Naive thymus-derived CD4-positive, alpha-beta T cell (primary cell): ENCODE measurements at regions of chr20 and their contacts with region 1.

Region 1: DNA sequence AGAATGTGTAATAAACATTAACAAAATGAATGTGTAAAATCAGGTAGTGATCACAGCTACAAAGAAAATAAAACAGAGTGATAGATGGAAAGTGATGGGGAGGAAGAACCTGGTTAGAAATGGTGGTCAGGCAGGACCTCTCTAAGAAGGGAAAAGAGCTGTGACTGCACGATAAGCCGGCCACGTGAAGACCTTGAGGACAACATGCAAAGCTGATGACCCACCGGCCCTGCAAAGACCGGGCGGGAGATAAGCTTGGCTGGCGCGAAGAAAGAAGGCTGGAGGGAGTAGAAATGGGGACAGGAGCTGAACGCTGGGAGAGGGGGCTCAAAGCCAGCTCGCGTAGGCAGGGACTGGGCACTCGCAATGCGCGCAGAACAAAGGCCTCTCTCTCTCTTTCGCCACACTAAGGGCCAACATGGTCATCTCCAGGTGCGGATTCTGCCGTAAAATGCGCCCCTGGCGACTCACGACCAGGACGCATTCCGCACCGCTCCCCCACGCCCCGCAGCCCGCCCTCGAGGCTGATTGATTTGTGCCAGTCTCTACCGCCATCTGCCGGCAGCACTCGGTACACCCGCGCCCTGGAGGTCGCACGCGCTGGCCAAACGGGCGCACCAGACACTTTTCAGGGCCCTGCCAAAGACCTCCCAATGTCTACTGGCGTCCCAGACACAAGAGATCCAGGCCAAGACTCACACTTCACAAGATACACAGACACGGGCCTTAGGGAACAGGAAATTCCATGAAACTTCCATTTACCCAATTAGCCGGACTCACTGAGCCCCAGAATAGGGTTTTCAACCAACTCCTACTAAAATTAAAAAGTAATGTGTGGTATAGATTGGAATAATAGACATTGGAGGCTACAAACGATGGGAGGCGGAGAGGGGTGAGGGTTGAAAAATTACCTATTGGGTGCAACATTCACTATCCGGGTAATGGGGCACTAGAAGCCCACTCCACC is 9.4 kb downstream of the DEFB132 start:
- DNase-seq: peak; percentile 74 to 91 (median 86)
- ATAC-seq: peak; percentile 99
- H3K4me3 ChIP-seq: peak overlapping the region; percentile 57
- H3K4me3 Mint-ChIP-seq: peak overlapping the region; percentile 82 to 94 (median 90)
- H3K27ac ChIP-seq: no peak overlapping the region
- H3K27ac Mint-ChIP-seq: peak overlapping the region in 5 of 9 donors; percentile 32 to 85 (median 60)
- H3K4me1 ChIP-seq: peaks cover 0 to 5% of the 10 kb centered on the region in 2 donors
- H3K4me1 Mint-ChIP-seq: peaks cover 5 to 11% (median 8%) of the 10 kb centered on the region in 7 donors
- H3K27me3 ChIP-seq: no peaks in the 10 kb centered on the region
- H3K27me3 Mint-ChIP-seq: peaks cover 0 to 9% (median 5%) of the 10 kb centered on the region in 5 donors

Region 2: GRCh38 chr20:208942-209566 is 57.8 kb before region 1 on chr20:
- CTCF ChIA-PET with region 1: interaction called, 16 read pairs
- POLR2A ChIA-PET with region 1: no interaction called
- intact Hi-C with region 1: loop called (anchors 1 kb)
- DNase-seq: peak in 7 of 9 donors; percentile 40 to 67 (median 55)
- ATAC-seq: peak; percentile 86
- H3K4me3 ChIP-seq: no peak overlapping the region
- H3K4me3 Mint-ChIP-seq: no peak overlapping the region
- H3K27ac ChIP-seq: no peak overlapping the region
- H3K27ac Mint-ChIP-seq: no peak overlapping the region
- H3K4me1 ChIP-seq: no peaks in the 10 kb centered on the region
- H3K4me1 Mint-ChIP-seq: no peaks in the 10 kb centered on the region
- H3K27me3 ChIP-seq: no peaks in the 10 kb centered on the region
- H3K27me3 Mint-ChIP-seq: peaks cover 0 to 28% (median 0%) of the 10 kb centered on the region in 5 donors

Region 3: GRCh38 chr20:252801-253200 is 14.1 kb before region 1 on chr20:
- CTCF ChIA-PET with region 1: interaction called, 10 read pairs
- POLR2A ChIA-PET with region 1: no interaction called
- intact Hi-C with region 1: no loop called
- DNase-seq: no peak
- ATAC-seq: no peak
- H3K4me3 ChIP-seq: no peak overlapping the region
- H3K4me3 Mint-ChIP-seq: no peak overlapping the region
- H3K27ac ChIP-seq: no peak overlapping the region
- H3K27ac Mint-ChIP-seq: peak overlapping the region in 2 of 9 donors; percentile 4 to 37
- H3K4me1 ChIP-seq: peaks cover 0 to 4% of the 10 kb centered on the region in 2 donors
- H3K4me1 Mint-ChIP-seq: peaks cover 0 to 21% (median 13%) of the 10 kb centered on the region in 7 donors
- H3K27me3 ChIP-seq: no peaks in the 10 kb centered on the region
- H3K27me3 Mint-ChIP-seq: peaks cover 0 to 5% (median 0%) of the 10 kb centered on the region in 5 donors

Region 4: DNA sequence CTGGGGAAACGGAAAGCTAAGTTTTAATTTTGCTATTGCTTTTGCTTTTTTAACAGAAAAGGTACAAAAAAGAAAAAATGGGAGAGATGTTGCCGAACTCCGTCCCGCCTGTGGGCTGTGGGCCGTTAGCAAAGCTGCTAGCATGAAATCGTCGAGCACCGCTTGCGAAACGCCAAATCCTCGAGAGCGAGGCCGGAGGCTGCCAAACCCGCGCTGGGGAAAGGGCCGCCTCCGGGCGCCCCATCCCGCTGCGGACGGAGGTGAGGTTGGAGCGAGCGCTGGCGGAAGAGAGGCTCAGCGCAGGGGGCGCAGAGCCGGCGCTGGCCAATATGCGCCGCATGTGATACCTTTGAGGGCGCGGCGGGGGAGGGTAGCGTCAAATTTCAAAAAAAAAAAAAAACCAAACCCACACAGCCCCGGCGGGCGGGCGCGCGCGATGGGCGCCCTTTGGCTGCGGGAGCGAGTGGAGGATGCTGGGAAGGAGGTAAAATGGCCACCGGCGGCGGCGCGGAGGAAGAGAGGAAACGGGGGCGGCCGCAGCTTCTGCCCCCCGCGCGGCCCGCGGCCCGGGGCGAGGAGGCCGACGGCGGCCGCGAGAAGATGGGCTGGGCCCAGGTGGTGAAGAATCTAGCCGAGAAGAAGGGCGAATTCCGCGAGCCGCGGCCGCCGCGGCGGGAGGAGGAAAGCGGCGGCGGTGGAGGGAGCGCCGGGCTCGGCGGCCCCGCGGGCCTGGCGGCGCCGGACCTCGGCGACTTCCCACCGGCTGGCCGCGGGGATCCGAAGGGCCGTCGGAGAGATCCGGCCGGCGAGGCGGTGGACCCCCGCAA is 30.4 kb after region 1 on chr20 and contains the start of gene ZCCHC3:
- CTCF ChIA-PET with region 1: no interaction called
- POLR2A ChIA-PET with region 1: interaction called, 5 read pairs
- intact Hi-C with region 1: loop called in 1 of 2 experiments (anchors 1 kb)
- DNase-seq: peak; percentile 72 to 89 (median 84)
- ATAC-seq: peak; percentile 94
- H3K4me3 ChIP-seq: peak within 1 kb of the TSS; percentile 96
- H3K4me3 Mint-ChIP-seq: peak within 1 kb of the TSS; percentile 92 to 100 (median 98)
- H3K27ac ChIP-seq: peak within 1 kb of the TSS; percentile 91
- H3K27ac Mint-ChIP-seq: peak within 1 kb of the TSS; percentile 94 to 100 (median 97)
- H3K4me1 ChIP-seq: peaks cover 14 to 21% of the 10 kb centered on the region in 2 donors
- H3K4me1 Mint-ChIP-seq: peaks cover 33 to 51% (median 40%) of the 10 kb centered on the region in 7 donors
- H3K27me3 ChIP-seq: no peaks in the 10 kb centered on the region
- H3K27me3 Mint-ChIP-seq: peaks cover 0 to 2% (median 0%) of the 10 kb centered on the region in 5 donors
- total RNA-seq, gene ZCCHC3: 14.6 to 31.9 (median 27.1) TPM

Region 5: GRCh38 chr20:330233-331149 is 63.6 kb after region 1 on chr20:
- CTCF ChIA-PET with region 1: interaction called, 29 read pairs
- POLR2A ChIA-PET with region 1: interaction called, 4 read pairs
- intact Hi-C with region 1: loop called (anchors 1 kb)
- DNase-seq: peak; percentile 34 to 74 (median 61)
- ATAC-seq: peak; percentile 65
- H3K4me3 ChIP-seq: no peak overlapping the region
- H3K4me3 Mint-ChIP-seq: no peak overlapping the region
- H3K27ac ChIP-seq: no peak overlapping the region
- H3K27ac Mint-ChIP-seq: peak overlapping the region in 7 of 9 donors; percentile 28 to 85 (median 68)
- H3K4me1 ChIP-seq: peaks cover 4% of the 10 kb centered on the region in 2 donors
- H3K4me1 Mint-ChIP-seq: peaks cover 12 to 30% (median 21%) of the 10 kb centered on the region in 7 donors
- H3K27me3 ChIP-seq: no peaks in the 10 kb centered on the region
- H3K27me3 Mint-ChIP-seq: peaks cover 0 to 3% (median 0%) of the 10 kb centered on the region in 5 donors

Region 6: GRCh38 chr20:391041-391711 is 124.3 kb after region 1 on chr20:
- CTCF ChIA-PET with region 1: no interaction called
- POLR2A ChIA-PET with region 1: no interaction called
- intact Hi-C with region 1: no loop called
- DNase-seq: no peak
- ATAC-seq: no peak
- H3K4me3 ChIP-seq: no peak overlapping the region
- H3K4me3 Mint-ChIP-seq: no peak overlapping the region
- H3K27ac ChIP-seq: no peak overlapping the region
- H3K27ac Mint-ChIP-seq: no peak overlapping the region
- H3K4me1 ChIP-seq: no peaks in the 10 kb centered on the region
- H3K4me1 Mint-ChIP-seq: peaks cover 0 to 5% (median 0%) of the 10 kb centered on the region in 7 donors
- H3K27me3 ChIP-seq: no peaks in the 10 kb centered on the region
- H3K27me3 Mint-ChIP-seq: no peaks in the 10 kb centered on the region